ENCODE measurements at regions of chr11 and their contacts with region 1.

Region 1: DNA sequence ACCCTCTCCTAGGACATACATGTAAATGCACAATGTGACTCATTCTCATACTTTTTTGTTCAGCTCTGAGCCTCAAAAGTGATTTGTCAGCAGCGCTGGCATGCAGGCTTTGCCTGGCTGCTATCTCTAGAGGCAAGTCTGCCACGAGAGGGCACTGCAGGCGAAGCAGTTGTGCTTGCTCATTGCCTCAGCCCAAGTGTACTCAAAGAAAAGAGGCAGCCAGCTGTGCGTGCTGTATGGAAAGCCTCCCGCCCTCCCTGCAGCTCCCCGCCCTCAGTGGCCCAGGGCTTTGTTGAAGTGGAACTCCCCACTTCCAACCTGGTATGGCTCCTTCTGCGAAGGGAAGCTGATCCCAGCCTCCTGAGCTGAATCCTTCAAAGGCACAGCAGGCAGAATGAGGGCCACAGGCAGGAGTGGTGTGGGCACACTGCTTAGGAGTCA is 16.3 kb downstream of the SDHAF2 start:
- H3K4me3 Mint-ChIP-seq: no peak overlapping the region
- H3K27ac Mint-ChIP-seq: peak overlapping the region; percentile 62
- H3K4me1 Mint-ChIP-seq: peaks cover 13% of the 10 kb centered on the region
- H3K27me3 Mint-ChIP-seq: no peaks in the 10 kb centered on the region

Region 2: GRCh38 chr11:60970369-60970774 is 475.9 kb before region 1 on chr11:
- intact Hi-C with region 1: no loop called
- H3K4me3 Mint-ChIP-seq: no peak overlapping the region
- H3K27ac Mint-ChIP-seq: no peak overlapping the region
- H3K4me1 Mint-ChIP-seq: peaks cover 48% of the 10 kb centered on the region
- H3K27me3 Mint-ChIP-seq: peaks cover 36% of the 10 kb centered on the region

Region 3: DNA sequence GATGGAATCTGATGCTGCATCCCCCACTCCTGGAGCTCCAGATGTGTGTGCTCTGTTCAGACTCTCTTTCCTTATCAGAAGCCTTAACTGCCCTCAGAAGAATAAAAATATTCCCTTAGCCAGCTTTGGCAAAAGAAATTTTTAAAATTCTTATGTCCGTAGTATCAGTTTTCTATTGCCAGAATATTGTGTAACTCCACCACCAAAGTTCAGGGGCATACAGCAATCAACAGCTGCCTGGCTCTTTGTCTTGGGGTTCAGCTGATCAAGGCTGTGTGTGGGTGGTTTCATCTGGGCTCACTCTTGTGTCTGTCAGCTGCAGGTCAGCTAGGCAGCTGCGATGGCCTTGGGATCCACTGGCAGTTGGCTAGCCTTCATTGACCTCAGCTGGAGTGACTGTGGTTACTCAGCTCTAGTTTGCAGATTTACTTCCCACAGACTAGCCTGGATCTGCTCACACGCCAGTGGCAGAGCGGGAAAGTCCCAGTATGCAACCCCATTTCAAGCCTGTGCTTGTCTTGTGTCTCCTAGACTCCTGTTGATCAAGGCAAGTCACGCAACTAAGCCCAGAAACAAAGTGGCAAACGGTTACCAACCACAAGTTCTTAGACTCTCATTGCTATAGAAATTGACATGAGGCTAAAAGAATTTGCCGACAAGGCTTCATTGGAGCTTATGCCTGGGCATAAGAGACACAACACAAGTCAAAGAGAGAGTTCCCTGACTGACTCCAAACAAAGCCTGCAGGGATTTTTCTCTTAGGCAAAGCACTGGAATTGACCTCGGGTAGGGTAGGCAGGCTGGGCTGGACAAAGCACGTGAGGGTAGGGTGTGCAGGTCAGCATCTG is 76.6 kb before region 1 on chr11:
- intact Hi-C with region 1: no loop called
- H3K4me3 Mint-ChIP-seq: no peak overlapping the region
- H3K27ac Mint-ChIP-seq: peak overlapping the region; percentile 32
- H3K4me1 Mint-ChIP-seq: peaks cover 27% of the 10 kb centered on the region
- H3K27me3 Mint-ChIP-seq: no peaks in the 10 kb centered on the region

Region 4: GRCh38 chr11:61417670-61418069 is 28.6 kb before region 1 on chr11:
- intact Hi-C with region 1: no loop called
- H3K4me3 Mint-ChIP-seq: no peak overlapping the region
- H3K27ac Mint-ChIP-seq: peak overlapping the region; percentile 55
- H3K4me1 Mint-ChIP-seq: peaks cover 41% of the 10 kb centered on the region
- H3K27me3 Mint-ChIP-seq: no peaks in the 10 kb centered on the region

Region 5: GRCh38 chr11:61516675-61517572 is 70.7 kb after region 1 on chr11:
- intact Hi-C with region 1: loop called (anchors 1 kb)
- H3K4me3 Mint-ChIP-seq: peak overlapping the region; percentile 24
- H3K27ac Mint-ChIP-seq: no peak overlapping the region
- H3K4me1 Mint-ChIP-seq: peaks cover 8% of the 10 kb centered on the region
- H3K27me3 Mint-ChIP-seq: peaks cover 53% of the 10 kb centered on the region

Region 6: DNA sequence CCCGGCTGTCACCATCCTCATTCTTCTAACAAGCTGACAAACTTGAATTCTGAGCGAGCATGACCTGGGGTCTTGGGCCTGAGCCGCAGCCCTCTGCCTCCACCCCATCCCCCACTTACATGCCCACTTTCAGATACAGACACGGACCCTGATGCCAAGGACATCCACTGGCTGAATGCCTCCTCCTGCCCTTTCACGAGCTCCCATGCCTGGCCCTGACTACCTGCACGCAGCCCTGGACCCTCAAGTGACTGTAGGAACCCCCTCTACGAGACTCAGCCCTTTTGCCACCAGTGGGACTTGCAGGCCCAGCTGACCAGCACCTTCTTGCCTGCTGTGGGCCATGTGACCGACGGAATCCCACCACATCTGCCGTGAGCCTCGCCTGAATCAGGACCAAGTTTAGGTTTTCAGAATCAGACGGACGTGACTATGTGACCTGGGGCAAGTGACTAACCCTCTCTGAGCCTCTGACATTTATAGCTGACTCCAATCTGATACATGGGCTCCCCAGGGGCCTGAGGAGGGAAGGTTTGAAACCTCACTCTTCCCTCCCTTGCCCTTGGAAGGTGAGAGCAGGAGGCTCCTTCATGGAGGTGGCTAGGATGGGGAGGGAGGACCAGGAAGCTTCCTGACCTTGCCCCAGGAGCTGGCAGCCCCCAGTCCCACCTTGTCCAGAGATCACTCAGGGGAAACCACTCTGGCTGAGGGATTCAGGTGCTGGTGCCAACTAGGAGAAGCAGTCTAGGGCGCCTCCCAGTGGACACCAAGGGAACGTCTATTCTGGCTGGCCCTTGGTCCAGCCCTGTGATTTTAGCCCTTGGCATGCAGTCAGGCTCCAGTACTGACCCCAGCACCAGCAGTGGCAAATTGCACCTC is 181.6 kb after region 1 on chr11:
- intact Hi-C with region 1: loop called (anchors 1 kb)
- H3K4me3 Mint-ChIP-seq: no peak overlapping the region
- H3K27ac Mint-ChIP-seq: no peak overlapping the region
- H3K4me1 Mint-ChIP-seq: no peaks in the 10 kb centered on the region
- H3K27me3 Mint-ChIP-seq: peaks cover 33% of the 10 kb centered on the region

Region 7: DNA sequence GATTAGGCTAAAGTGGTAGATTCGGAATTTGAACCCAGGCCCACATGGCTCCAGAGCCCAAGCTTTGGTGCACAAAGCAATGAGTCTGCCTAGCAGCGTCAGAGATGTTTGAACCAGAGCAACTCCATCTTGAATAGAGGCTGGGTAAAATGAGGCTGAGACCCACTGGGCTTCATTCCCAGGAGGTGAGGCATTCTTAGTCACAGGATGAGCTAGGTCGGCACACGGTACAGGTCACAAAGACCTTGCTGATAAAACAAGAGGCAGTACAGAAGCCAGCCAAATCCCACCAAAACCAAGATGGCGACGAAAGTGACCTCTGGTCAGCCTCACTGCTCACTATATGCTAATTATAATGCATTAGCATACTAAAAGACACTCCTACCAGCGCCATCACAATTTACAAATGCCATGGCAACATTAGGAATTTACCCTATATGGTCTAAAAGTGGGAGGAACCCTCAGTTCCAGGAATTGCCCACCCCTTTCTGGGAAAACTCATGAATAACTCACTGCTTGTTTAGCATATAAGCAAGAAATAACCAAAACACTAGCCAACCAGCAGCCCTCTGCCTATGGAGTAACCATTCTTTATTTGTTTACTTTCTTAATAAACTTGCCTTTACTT is 193.7 kb after region 1 on chr11:
- intact Hi-C with region 1: loop called (anchors 1 kb)
- H3K4me3 Mint-ChIP-seq: no peak overlapping the region
- H3K27ac Mint-ChIP-seq: no peak overlapping the region
- H3K4me1 Mint-ChIP-seq: peaks cover 1% of the 10 kb centered on the region
- H3K27me3 Mint-ChIP-seq: peaks cover 39% of the 10 kb centered on the region